ENCODE measurements at regions of chr9 and their contacts with region 1.

Region 1: GRCh38 chr9:34546834-34547827 is 24.3 kb upstream of the ENHO start:
- DNase-seq: peak; percentile 54
- H3K4me3 ChIP-seq: no peak overlapping the region
- H3K27ac ChIP-seq: no peak overlapping the region
- H3K4me1 ChIP-seq: no peaks in the 10 kb centered on the region
- CTCF ChIP-seq: peak; percentile 78

Region 2: DNA sequence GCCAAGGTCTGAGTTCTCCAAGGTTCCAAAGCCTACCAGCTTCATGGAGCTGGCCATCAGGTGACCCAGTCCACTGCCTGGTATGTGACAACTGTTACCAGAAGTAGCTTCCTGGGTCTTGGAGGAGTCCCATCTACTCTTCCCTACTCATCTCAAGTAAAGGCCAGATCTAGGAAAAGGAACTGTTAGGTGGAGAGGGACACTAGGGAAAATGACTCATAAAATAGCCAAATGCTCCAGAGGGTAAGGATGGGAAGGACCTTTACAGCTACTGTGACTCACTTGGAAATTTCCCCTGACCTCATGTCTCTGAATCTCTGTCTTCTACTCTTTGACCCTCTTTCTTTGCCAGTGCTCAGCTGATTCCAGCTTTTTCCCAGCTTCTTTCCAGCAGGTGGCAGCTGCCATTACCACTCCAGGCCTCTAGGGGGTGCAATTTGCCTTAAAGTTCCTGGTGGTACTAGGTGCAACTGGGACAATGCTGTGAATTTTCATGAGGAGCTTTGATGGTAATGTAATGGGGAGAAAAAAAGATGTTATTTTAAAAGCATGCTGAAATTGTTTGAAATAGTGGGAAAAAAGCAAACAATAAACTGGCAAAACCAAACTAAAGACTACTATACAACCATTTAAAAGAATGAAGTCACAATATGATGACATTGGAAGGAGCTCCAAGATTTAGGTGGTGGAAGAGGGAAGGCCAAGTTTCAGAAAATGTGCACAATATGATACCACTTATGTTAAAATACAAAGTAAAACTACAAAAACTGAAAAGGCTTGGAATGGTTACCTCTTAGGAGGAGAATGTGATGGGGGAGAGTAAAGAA is 143.4 kb before region 1 on chr9:
- CTCF ChIA-PET with region 1: no interaction called
- POLR2A ChIA-PET with region 1: no interaction called
- intact Hi-C with region 1: loop called (anchors 5 kb)
- DNase-seq: peak; percentile 65
- H3K4me3 ChIP-seq: no peak overlapping the region
- H3K27ac ChIP-seq: no peak overlapping the region
- H3K4me1 ChIP-seq: no peaks in the 10 kb centered on the region
- CTCF ChIP-seq: peak; percentile 100

Region 3: GRCh38 chr9:34437006-34437925 is 109.9 kb before region 1 on chr9:
- CTCF ChIA-PET with region 1: no interaction called
- POLR2A ChIA-PET with region 1: no interaction called
- intact Hi-C with region 1: loop called (anchors 2 kb)
- DNase-seq: peak; percentile 76
- H3K4me3 ChIP-seq: no peak overlapping the region
- H3K27ac ChIP-seq: no peak overlapping the region
- H3K4me1 ChIP-seq: no peaks in the 10 kb centered on the region
- CTCF ChIP-seq: peak; percentile 89

Region 4: DNA sequence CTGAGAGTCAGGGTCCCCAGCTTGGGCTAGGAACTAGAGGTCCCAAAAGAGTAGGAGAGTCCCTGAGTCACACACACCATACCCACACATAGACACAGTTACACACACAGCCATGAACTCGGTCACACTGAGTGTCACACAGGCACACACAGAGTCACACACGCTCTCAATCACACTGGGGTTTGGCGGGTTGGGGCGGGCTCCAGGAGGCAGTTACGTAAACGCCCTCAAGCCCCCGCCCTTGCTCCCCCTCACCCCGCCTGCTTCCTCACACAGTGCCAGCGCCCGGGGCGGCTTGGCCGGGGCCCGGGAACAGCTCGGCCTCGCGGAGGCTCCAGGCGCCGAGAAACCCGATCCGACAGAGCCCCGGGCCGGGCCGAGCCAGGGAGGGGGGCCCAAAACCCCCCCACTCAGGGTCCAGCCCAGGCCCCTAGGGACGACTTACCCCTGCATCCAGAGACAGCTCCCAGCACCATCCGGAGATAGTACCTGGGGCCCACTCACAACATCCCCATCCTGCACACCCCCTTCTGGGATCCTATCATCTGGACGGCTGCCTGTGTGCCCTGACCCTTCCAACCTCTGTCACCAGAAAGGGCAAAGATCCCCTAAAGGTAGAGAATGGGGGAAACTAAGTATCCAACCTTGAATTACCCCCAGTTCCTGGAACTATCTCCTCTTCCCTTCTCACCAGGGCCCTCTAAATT is 45.9 kb after region 1 on chr9:
- CTCF ChIA-PET with region 1: no interaction called
- POLR2A ChIA-PET with region 1: no interaction called
- intact Hi-C with region 1: loop called (anchors 1 kb)
- DNase-seq: no peak
- H3K4me3 ChIP-seq: no peak overlapping the region
- H3K27ac ChIP-seq: no peak overlapping the region
- H3K4me1 ChIP-seq: no peaks in the 10 kb centered on the region
- CTCF ChIP-seq: no peak

Region 5: GRCh38 chr9:34603610-34604231 is 56.6 kb after region 1 on chr9:
- CTCF ChIA-PET with region 1: no interaction called
- POLR2A ChIA-PET with region 1: no interaction called
- intact Hi-C with region 1: loop called (anchors 1 kb)
- DNase-seq: peak; percentile 78
- H3K4me3 ChIP-seq: no peak overlapping the region
- H3K27ac ChIP-seq: no peak overlapping the region
- H3K4me1 ChIP-seq: no peaks in the 10 kb centered on the region
- CTCF ChIP-seq: peak; percentile 96

Region 6: GRCh38 chr9:34615132-34615531 is 68.0 kb after region 1 on chr9:
- CTCF ChIA-PET with region 1: no interaction called
- POLR2A ChIA-PET with region 1: no interaction called
- intact Hi-C with region 1: no loop called
- DNase-seq: no peak
- H3K4me3 ChIP-seq: no peak overlapping the region
- H3K27ac ChIP-seq: no peak overlapping the region
- H3K4me1 ChIP-seq: peaks cover 31% of the 10 kb centered on the region
- CTCF ChIP-seq: no peak